Activated B cell treated with CpG ODN at 0.5 μM for 24 hours (primary cell): ENCODE measurements at regions of chr20 and their contacts with region 1.

Region 1: DNA sequence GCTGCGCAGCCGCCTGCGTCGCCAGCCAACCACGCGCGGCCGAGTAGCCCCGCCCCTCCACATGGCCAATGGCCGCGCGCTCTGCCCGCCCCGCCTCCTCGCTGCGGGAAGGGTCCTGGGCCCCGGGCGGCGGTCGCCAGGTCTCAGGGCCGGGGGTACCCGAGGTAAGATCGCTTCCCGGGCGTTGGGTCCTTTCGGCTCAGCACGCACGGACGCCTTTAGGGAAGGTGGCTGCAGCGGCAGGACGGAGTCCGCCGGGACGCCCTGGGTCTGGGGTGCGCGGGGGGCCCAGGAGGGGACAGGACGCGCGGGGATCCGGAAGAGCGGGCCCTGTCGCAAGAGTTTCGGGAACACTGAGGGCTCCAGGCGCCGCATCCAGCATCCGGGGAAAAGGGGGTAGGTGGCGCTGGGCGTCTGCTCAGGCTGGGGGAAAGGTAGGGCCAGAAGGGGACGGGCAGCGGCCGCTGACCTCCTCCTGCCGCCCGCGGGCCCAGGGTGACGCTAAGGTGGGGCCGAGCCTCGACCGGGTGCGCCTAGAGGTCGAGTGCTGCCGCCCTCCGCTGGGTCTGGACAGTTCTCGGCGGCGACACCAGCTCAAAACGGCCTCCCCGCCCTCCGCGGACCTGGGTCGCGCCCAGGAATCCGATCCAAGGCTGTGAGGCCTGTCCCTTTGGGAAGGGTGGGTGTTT is at the start of gene MAVS:
- DNase-seq: peak; percentile 85
- ATAC-seq: peak; percentile 99
- H3K4me3 Mint-ChIP-seq: peak within 1 kb of the TSS; percentile 88
- H3K27ac Mint-ChIP-seq: peak within 1 kb of the TSS; percentile 80
- H3K4me1 Mint-ChIP-seq: peaks cover 26% of the 10 kb centered on the region
- H3K27me3 Mint-ChIP-seq: no peaks in the 10 kb centered on the region
- CTCF ChIP-seq: no peak
- total RNA-seq, gene MAVS: 33.5 and 39.7 TPM in 2 replicates

Region 2: DNA sequence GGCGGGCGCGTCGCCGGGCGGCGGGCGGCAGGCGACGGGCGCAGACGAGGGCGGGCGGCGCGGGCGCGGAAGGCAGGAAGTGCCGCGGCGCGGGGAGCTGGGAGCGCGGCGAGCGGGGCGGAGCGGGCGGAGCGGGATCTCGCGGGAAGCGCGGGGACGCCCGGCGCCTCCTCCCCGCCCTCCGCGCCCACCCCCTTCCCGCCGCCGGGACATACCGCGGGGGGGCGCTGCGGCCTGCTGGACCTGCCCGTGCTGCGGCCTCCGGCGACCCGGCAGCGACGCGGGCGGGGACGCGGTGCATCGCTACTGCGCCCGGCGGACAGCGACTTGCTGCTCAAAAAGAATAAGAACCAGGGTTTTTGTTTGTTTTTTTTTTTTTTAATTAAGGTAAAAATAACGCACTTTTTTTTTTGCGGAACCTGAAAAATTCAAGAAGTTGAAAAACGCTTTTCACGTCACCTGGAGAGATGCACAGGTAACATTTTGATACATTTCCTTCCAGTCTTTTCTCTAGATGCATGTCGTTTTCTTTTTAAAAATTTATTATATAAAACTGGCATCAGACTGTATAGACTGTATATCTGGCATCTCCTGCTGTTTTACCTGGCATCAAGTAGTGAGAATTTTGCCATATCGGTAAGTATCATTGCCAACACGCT is 60.1 kb before region 1 on chr20 and contains the start of gene CENPB:
- CTCF ChIA-PET with region 1: interaction called, 46 read pairs
- POLR2A ChIA-PET with region 1: interaction called, 4 read pairs
- intact Hi-C with region 1: loop called (anchors 2 kb)
- DNase-seq: peak; percentile 96
- ATAC-seq: peak; percentile 95
- H3K4me3 Mint-ChIP-seq: peak within 1 kb of the TSS; percentile 82
- H3K27ac Mint-ChIP-seq: peak within 1 kb of the TSS; percentile 70
- H3K4me1 Mint-ChIP-seq: peaks cover 24% of the 10 kb centered on the region
- H3K27me3 Mint-ChIP-seq: no peaks in the 10 kb centered on the region
- CTCF ChIP-seq: no peak
- total RNA-seq, gene CENPB: 50.1 and 51.7 TPM in 2 replicates

Region 3: GRCh38 chr20:3795511-3796468 is 51.1 kb before region 1 on chr20 and contains the start of gene CDC25B:
- CTCF ChIA-PET with region 1: no interaction called
- POLR2A ChIA-PET with region 1: interaction called, 5 read pairs
- intact Hi-C with region 1: loop called (anchors 2 kb)
- DNase-seq: peak; percentile 75
- ATAC-seq: peak; percentile 84
- H3K4me3 Mint-ChIP-seq: peak within 1 kb of the TSS; percentile 92
- H3K27ac Mint-ChIP-seq: peak within 1 kb of the TSS; percentile 95
- H3K4me1 Mint-ChIP-seq: peaks cover 50% of the 10 kb centered on the region
- H3K27me3 Mint-ChIP-seq: no peaks in the 10 kb centered on the region
- CTCF ChIP-seq: no peak
- total RNA-seq, gene CDC25B: 21.6 and 24.3 TPM in 2 replicates

Region 4: DNA sequence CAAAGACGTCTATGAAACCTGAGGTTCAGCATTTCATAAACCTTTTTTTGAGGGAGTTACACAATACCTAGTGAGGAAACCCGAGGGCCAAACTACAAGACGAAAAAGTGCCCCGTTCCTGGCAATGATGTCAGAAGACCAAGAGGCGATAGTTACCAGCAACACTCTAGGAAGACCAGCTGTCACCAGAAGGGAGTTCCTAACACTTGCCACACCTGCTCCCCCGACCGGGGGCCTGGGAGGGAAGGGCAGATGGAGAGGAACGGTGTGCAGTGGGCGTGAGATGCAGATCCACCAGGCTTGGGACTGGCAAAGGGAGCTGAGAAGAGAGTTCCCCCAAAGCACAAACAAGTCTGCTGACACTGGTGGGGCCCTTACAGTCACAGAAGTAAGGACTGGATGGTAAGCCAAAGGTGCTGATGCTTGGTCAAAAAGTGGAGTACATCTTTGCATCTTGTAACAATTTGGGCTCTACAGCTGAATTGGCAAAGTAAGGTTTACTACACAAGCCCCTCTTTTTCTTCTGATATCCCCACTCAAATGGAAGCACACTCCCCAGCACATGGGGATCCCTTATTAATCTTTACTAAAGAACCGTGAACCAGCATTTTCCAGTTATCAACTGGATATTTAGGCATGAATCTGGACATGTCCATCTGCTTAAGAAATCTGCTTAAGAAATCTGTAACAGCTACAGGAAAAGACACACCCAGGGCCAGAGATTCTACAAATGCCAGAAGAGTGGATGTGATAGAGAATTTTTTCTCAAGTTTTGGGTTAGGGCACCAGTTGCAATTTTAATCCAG is 80.8 kb after region 1 on chr20:
- CTCF ChIA-PET with region 1: no interaction called
- POLR2A ChIA-PET with region 1: no interaction called
- intact Hi-C with region 1: no loop called
- DNase-seq: no peak
- ATAC-seq: no peak
- H3K4me3 Mint-ChIP-seq: no peak overlapping the region
- H3K27ac Mint-ChIP-seq: peak overlapping the region; percentile 27
- H3K4me1 Mint-ChIP-seq: peaks cover 8% of the 10 kb centered on the region
- H3K27me3 Mint-ChIP-seq: no peaks in the 10 kb centered on the region
- CTCF ChIP-seq: no peak

Region 5: GRCh38 chr20:3970016-3970415 is 123.1 kb after region 1 on chr20:
- CTCF ChIA-PET with region 1: no interaction called
- POLR2A ChIA-PET with region 1: no interaction called
- intact Hi-C with region 1: no loop called
- DNase-seq: no peak
- ATAC-seq: no peak
- H3K4me3 Mint-ChIP-seq: no peak overlapping the region
- H3K27ac Mint-ChIP-seq: no peak overlapping the region
- H3K4me1 Mint-ChIP-seq: no peaks in the 10 kb centered on the region
- H3K27me3 Mint-ChIP-seq: no peaks in the 10 kb centered on the region
- CTCF ChIP-seq: no peak

Region 6: DNA sequence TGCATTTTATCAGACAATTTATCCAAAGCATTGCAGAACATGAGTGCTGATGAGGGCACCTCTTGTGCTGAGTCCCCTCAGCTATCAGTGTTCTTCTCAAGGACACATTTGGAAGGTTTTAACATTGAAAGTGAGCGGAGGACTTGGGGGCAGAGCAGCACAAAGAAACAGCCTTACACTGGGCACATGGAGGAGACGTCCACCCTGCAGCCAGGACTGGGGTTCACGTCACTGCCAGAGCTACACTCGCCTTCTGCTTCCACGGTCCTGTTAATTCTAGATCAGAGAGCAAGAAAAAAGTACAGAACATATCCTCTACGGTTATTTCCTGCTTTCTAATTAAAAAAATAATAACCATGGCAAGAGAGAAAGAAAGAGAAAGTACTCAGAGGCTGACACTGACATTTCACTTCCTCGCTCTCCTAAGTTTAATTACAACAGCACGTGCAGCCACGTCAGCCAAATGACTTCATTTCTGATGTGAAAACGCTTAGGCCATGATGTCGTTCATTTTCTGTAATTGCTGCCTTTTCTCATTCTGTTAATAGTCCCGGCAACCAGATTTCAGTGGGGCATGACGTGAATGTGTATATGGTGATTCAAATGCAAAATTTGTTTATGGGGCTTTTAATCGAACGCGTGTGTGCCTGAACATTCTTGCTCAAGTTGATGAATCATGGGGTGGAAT is 880.0 kb after region 1 on chr20:
- CTCF ChIA-PET with region 1: no interaction called
- POLR2A ChIA-PET with region 1: interaction called, 13 read pairs
- intact Hi-C with region 1: no loop called
- DNase-seq: no peak
- ATAC-seq: peak; percentile 80
- H3K4me3 Mint-ChIP-seq: peak overlapping the region; percentile 61
- H3K27ac Mint-ChIP-seq: peak overlapping the region; percentile 89
- H3K4me1 Mint-ChIP-seq: peaks cover 19% of the 10 kb centered on the region
- H3K27me3 Mint-ChIP-seq: no peaks in the 10 kb centered on the region
- CTCF ChIP-seq: no peak